Spleen (tissue), 13 donors: ENCODE measurements at regions of chr7 and their contacts with region 1.

Region 1: DNA sequence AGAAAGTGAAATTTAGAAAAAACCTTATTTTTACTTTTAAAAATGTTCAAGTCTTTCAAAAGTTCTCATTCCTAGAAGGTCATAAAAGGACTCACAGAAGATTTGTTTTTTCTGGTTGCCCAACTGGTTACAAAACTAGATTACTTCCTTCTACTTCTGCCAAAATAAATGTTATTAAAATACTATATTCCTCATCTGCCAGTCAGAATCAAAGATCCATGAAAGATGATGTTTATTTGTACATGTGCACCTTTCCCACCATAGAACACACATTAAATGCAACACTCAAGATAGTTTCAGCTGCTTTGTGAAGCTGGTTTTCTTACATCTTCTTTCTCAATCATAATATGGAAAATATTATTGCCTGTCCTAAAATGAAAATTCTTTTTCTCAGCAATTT is 465.4 kb downstream of the ETV1 start:
- DNase-seq: no peak
- H3K4me3 ChIP-seq: no peak overlapping the region
- H3K27ac ChIP-seq: no peak overlapping the region
- H3K4me1 ChIP-seq: no peaks in the 10 kb centered on the region
- H3K27me3 ChIP-seq: no peaks in the 10 kb centered on the region
- CTCF ChIP-seq: no peak
- POLR2A ChIP-seq: no peak

Region 2: GRCh38 chr7:14457568-14458453 is 933.7 kb after region 1 on chr7:
- intact Hi-C with region 1: loop called (anchors 10 kb)
- DNase-seq: peak; percentile 64
- H3K4me3 ChIP-seq: peak overlapping the region in 1 of 8 donors; percentile 28
- H3K27ac ChIP-seq: no peak overlapping the region
- H3K4me1 ChIP-seq: peaks cover 0 to 6% (median 2%) of the 10 kb centered on the region in 6 donors
- H3K27me3 ChIP-seq: peaks cover 0 to 6% (median 0%) of the 10 kb centered on the region in 7 donors
- CTCF ChIP-seq: peak in 9 of 11 experiments; percentile 19 to 76 (median 64)
- POLR2A ChIP-seq: no peak